ENCODE measurements at regions of chr11 and their contacts with region 1.

Region 1: DNA sequence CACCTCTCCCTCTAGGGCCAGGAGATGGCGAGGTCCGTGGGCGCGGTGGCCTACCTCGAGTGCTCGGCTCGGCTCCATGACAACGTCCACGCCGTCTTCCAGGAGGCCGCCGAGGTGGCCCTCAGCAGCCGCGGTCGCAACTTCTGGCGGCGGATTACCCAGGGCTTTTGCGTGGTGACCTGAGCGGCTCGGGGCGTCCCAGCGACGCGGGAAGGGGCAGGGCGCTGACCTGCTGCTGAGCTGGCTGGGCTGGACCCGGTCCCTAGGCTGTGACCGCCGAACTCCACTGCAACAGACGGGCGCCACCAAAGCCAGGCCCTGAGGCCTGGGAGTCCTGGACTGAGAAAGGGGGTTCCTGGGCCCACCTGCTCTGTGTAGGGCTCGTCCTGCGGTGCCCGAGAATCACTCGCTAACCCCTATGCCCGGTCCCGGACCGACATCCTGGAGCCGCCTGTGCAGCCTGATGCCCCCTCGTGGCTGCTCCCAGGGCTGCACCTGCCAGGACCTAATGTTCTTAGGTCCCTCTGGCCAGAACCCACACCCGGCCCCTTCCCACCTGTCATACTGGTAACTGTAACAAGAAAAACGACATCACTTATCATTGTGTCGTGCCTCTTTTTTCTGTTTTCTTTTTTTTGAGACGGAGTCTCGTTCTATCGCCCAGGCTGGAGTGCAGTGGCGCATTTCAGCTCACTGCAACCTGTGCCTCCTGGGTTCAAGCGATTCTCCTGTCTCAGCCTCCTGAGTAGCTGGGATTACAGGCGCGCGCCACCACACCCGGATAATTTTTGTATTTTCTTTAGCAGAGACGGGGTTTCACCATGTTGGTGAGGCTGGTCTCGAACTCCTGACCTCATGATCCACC is 15.0 kb downstream of the RHOD start:
- DNase-seq: peak; percentile 50 to 82 (median 66)
- ATAC-seq: peak; percentile 99
- H3K4me3 ChIP-seq: peak overlapping the region; percentile 37
- H3K4me3 Mint-ChIP-seq: no peak overlapping the region
- H3K27ac ChIP-seq: no peak overlapping the region
- H3K27ac Mint-ChIP-seq: no peak overlapping the region
- H3K4me1 ChIP-seq: peaks cover 8% of the 10 kb centered on the region
- H3K4me1 Mint-ChIP-seq: no peaks in the 10 kb centered on the region
- H3K27me3 ChIP-seq: peaks cover 0 to 2% of the 10 kb centered on the region in 2 experiments
- H3K27me3 Mint-ChIP-seq: peaks cover 6% of the 10 kb centered on the region
- CTCF ChIP-seq: peak; percentile 85

Region 2: GRCh38 chr11:67053896-67054842 is 17.5 kb before region 1 on chr11:
- CTCF ChIA-PET with region 1: interaction called, 3 read pairs
- POLR2A ChIA-PET with region 1: no interaction called
- intact Hi-C with region 1: loop called in 1 of 2 experiments (anchors 1 kb)
- DNase-seq: peak in 13 of 14 experiments; percentile 9 to 64 (median 29)
- ATAC-seq: peak; percentile 76
- H3K4me3 ChIP-seq: no peak overlapping the region
- H3K4me3 Mint-ChIP-seq: no peak overlapping the region
- H3K27ac ChIP-seq: no peak overlapping the region
- H3K27ac Mint-ChIP-seq: no peak overlapping the region
- H3K4me1 ChIP-seq: peaks cover 21% of the 10 kb centered on the region
- H3K4me1 Mint-ChIP-seq: peaks cover 16% of the 10 kb centered on the region
- H3K27me3 ChIP-seq: peaks cover 3 to 9% of the 10 kb centered on the region in 2 experiments
- H3K27me3 Mint-ChIP-seq: peaks cover 8% of the 10 kb centered on the region
- CTCF ChIP-seq: peak; percentile 48